BJ (cell line): ENCODE measurements at regions of chr9 and their contacts with region 1.

Region 1: GRCh38 chr9:111386386-111386785 is 56.4 kb upstream of the OR2K2 start:
- DNase-seq: no peak
- H3K4me3 ChIP-seq: no peak overlapping the region
- H3K27me3 ChIP-seq: no peaks in the 10 kb centered on the region
- CTCF ChIP-seq: no peak

Region 2: DNA sequence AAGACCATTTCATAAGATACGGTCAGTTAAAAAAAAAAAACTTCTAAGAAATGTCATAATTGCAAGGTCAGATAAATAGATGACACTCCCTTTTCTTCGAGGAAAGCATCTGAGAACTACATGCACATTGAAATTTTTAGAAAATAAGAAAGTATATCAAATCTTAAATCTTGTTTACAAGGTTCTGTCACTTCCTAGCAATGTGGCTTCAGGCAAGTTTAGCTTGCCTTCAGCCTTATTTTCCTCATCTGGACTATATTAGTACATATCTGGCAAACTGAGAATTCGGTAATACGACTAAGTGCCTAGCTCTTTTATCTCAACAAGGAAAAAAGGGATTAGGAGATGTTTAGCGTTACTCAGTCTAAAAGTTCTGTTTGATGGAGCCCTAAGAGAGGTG is 23.9 kb before region 1 on chr9:
- CTCF ChIA-PET with region 1: no interaction called
- POLR2A ChIA-PET with region 1: no interaction called
- DNase-seq: peak; percentile 67
- H3K4me3 ChIP-seq: no peak overlapping the region
- H3K27me3 ChIP-seq: no peaks in the 10 kb centered on the region
- CTCF ChIP-seq: no peak

Region 3: DNA sequence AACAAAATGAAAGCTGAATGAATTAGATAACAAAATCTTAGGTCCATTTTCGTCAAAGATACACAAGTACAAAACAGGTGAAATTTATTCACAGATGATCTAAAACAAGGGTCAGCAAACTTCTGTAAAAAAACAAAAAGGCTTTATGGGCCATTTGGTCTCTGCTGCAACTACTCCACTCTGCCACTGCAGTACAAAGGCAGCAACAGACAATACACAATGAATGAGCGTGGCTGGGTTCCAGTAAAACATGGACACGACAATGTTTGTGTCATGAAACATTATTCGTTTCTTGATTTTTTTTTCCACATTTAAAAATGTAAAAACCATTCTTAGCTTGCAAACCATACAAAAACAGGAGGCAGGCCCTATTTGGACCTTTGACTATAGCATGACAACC is 25.9 kb after region 1 on chr9:
- CTCF ChIA-PET with region 1: no interaction called
- POLR2A ChIA-PET with region 1: interaction called, 11 read pairs
- DNase-seq: no peak
- H3K4me3 ChIP-seq: no peak overlapping the region
- H3K27me3 ChIP-seq: no peaks in the 10 kb centered on the region
- CTCF ChIP-seq: no peak